HEK293T (cell line): ENCODE measurements at regions of chr14 and their contacts with region 1.

Region 1: DNA sequence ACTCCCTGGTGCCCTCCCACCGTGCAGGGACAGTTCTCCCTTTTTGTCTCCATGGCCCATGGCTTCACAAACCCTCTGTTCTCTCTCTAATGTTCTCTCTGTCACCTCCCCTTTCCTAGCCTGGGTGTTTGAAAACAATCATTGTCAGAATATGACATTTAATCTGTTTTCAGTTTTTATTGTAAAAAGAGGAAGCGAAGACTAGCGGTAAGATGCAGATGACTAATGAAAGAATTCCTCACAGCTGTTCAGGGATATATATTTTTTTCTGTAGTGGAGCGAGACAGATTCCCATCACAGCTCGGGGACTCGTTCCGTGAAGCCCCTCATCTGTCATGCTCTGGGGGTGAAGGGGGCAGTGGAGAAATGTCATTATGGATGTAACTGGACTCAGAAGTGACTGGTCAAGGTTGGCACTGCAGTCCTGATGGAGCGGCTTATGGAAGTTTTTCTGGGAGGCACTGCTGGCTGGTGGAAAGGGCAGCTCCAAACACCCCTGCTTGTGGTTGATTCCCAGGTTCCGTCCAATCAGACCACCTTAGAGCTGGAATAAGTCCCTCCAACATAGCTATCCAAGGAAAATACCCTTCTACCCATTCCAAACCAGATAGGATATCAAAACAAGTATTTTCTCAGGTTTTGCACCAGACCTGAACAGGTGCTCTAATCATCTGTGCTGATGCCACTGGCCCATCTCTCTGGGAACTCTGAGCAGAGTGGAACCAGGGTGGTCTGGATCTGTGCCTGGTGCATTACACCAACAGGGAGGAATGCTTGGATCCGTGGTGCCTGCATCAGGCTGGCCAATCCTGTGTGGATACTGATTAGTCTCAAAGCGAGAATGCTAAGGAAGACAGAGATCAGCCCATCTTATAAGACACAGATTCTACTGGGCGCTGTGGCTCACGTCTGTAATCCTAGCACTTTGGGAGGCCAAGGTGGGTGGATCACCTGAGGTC is 84.7 kb downstream of the GPATCH2L start:
- DNase-seq: no peak

Region 2: DNA sequence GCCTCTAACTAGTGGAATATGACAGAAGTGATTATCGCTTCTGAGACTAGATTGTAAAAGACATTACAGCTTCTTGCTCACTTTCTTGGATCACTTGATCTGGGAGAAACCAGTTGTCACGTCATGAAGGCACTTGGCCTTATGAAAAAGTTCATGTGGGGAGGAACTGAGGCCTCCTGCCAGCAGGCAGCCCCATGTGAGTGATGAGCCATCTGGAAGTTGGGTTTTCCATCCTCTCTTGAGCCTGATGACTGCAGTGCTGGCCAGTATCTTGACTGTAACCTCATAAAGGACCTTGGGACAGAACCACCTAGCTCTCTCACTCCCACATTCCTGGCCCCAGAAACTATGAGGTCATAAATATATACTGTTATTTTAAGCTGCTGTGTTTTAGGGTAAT is 547.4 kb before region 1 on chr14:
- CTCF ChIA-PET with region 1: interaction called, 10 read pairs
- POLR2A ChIA-PET with region 1: no interaction called
- DNase-seq: no peak

Region 3: GRCh38 chr14:76261371-76261811 is 24.9 kb after region 1 on chr14:
- CTCF ChIA-PET with region 1: no interaction called
- POLR2A ChIA-PET with region 1: no interaction called
- DNase-seq: no peak

Region 4: DNA sequence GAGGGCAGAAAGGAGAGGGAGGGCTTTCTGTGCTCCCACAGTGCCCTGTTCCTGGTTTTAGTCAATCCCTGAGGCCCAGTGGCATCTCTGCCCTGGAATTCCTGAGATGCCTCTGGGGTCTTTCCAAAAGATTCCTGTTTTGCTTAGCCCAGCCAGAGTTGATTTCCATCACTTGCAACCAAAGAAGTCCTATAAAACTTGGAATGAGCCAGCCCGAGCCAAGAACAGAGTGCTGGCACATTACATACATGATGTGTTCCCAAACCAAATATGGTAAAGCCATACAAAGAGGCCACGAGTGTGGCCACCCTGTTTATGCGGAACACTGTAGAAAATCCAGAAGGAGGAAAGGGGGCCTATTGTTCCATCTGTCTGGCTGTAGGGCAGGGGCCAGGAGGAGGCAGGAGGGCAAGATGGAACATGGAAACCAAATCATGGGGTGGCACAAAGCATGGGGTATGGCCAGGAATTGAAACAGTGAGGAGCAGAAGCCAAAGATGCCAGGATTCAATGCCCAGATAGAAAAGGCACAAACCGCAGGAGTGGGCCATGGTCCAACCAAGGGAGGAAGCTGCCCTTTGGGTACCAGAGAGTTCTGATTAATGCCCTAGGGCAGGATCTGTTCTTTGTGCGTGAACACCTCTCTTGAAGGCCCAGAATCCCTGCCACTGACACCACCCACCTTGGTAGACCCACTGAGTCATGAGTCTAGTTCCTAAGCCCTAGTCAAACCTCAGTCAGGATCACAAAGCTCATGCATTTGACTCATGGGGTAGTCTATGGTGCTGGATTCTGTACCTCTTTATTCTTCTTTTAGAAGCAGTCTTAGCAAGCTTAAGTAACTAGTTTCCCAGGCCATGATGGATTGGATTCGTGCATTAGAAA is 665.0 kb after region 1 on chr14:
- CTCF ChIA-PET with region 1: no interaction called
- POLR2A ChIA-PET with region 1: no interaction called
- DNase-seq: no peak